CD4-positive, alpha-beta T cell (primary cell): ENCODE measurements at regions of chr1 and their contacts with region 1.

Region 1: DNA sequence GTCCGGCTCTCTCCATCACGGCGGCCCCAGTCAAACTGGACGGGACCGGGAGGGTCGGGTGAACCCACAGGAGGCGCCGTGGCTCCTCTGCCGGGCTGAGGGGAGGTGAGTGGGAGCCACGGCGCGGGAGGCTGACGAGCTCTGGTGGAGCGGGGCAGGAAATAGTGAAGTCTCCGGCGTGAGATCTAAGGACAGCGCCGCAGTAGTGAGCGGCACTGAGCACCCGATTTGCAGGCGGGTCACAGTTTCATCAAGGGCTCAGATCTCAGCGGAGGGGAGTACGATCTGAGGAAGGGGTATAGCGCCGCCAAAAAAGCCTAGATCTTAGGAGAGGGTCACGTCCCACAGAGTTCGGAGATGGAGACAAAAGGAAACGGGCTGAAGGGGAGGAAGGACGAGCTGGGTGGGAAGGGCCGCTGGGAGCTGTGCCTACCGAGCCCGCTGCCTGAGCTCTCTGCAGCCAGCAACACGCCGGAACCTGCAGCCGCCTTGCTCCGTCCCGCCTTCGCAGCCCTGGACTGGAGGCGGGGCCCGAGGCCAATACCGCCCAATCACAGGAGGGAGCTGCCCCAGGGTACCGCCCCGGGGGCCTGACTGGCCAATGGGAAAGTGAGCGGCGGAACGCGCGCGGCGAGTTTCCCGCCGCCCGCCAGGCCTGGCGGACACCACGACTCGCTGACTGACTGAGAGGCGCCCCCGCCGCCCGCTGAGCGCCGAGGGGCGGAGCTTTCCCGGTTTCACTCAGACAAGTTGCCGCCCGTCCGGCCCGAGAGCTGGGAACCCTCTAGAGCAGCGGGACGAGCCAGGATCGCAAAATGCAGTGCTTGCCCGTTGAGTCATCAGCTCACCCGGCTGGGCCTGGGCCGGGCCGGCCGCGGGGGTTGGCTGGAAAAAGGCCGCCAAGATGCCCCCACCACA is 1.9 kb downstream of the SFN start:
- DNase-seq: peak; percentile 85 to 97 (median 92)
- ATAC-seq: peak; percentile 94
- H3K4me3 ChIP-seq: peak overlapping the region; percentile 99
- H3K4me3 Mint-ChIP-seq: peak overlapping the region; percentile 94
- H3K27ac ChIP-seq: peak overlapping the region; percentile 71 to 76
- H3K27ac Mint-ChIP-seq: peak overlapping the region; percentile 66
- H3K4me1 ChIP-seq: peaks cover 43% of the 10 kb centered on the region
- H3K4me1 Mint-ChIP-seq: peaks cover 34% of the 10 kb centered on the region
- H3K27me3 ChIP-seq: no peaks in the 10 kb centered on the region
- H3K27me3 Mint-ChIP-seq: no peaks in the 10 kb centered on the region
- CTCF ChIP-seq: no peak

Region 2: GRCh38 chr1:26820784-26821269 is 44.0 kb before region 1 on chr1:
- CTCF ChIA-PET with region 1: interaction called, 6 read pairs
- POLR2A ChIA-PET with region 1: interaction called, 14 read pairs
- intact Hi-C with region 1: no loop called
- DNase-seq: peak in 6 of 14 experiments; percentile 27 to 80 (median 64)
- ATAC-seq: peak; percentile 96
- H3K4me3 ChIP-seq: peak overlapping the region; percentile 38
- H3K4me3 Mint-ChIP-seq: peak overlapping the region; percentile 83
- H3K27ac ChIP-seq: peak overlapping the region; percentile 8 to 55
- H3K27ac Mint-ChIP-seq: peak overlapping the region; percentile 83
- H3K4me1 ChIP-seq: peaks cover 33% of the 10 kb centered on the region
- H3K4me1 Mint-ChIP-seq: peaks cover 36% of the 10 kb centered on the region
- H3K27me3 ChIP-seq: no peaks in the 10 kb centered on the region
- H3K27me3 Mint-ChIP-seq: no peaks in the 10 kb centered on the region
- CTCF ChIP-seq: peak; percentile 60

Region 3: GRCh38 chr1:26833432-26834405 is 31.1 kb before region 1 on chr1:
- CTCF ChIA-PET with region 1: interaction called, 4 read pairs
- POLR2A ChIA-PET with region 1: interaction called, 29 read pairs
- intact Hi-C with region 1: loop called in 1 of 2 experiments (anchors 5 kb)
- DNase-seq: peak; percentile 76 to 99 (median 86)
- ATAC-seq: peak; percentile 94
- H3K4me3 ChIP-seq: peak overlapping the region; percentile 32
- H3K4me3 Mint-ChIP-seq: peak overlapping the region; percentile 86
- H3K27ac ChIP-seq: peak overlapping the region; percentile 96 to 97
- H3K27ac Mint-ChIP-seq: peak overlapping the region; percentile 100
- H3K4me1 ChIP-seq: peaks cover 75% of the 10 kb centered on the region
- H3K4me1 Mint-ChIP-seq: peaks cover 75% of the 10 kb centered on the region
- H3K27me3 ChIP-seq: no peaks in the 10 kb centered on the region
- H3K27me3 Mint-ChIP-seq: no peaks in the 10 kb centered on the region
- CTCF ChIP-seq: peak; percentile 33

Region 4: GRCh38 chr1:26889551-26890466 is 24.9 kb after region 1 on chr1 and contains the start of gene GPN2:
- CTCF ChIA-PET with region 1: interaction called, 3 read pairs
- POLR2A ChIA-PET with region 1: interaction called, 36 read pairs
- intact Hi-C with region 1: no loop called
- DNase-seq: peak; percentile 59 to 90 (median 70)
- ATAC-seq: peak; percentile 91
- H3K4me3 ChIP-seq: peak within 1 kb of the TSS; percentile 89
- H3K4me3 Mint-ChIP-seq: peak within 1 kb of the TSS; percentile 96
- H3K27ac ChIP-seq: peak within 1 kb of the TSS; percentile 87 to 89
- H3K27ac Mint-ChIP-seq: peak within 1 kb of the TSS; percentile 97
- H3K4me1 ChIP-seq: peaks cover 31% of the 10 kb centered on the region
- H3K4me1 Mint-ChIP-seq: peaks cover 39% of the 10 kb centered on the region
- H3K27me3 ChIP-seq: no peaks in the 10 kb centered on the region
- H3K27me3 Mint-ChIP-seq: no peaks in the 10 kb centered on the region
- CTCF ChIP-seq: no peak
- total RNA-seq, gene GPN2: 42.0 to 44.4 TPM

Region 5: GRCh38 chr1:26900001-26900814 is 35.3 kb after region 1 on chr1 and contains the start of gene GPATCH3:
- CTCF ChIA-PET with region 1: no interaction called
- POLR2A ChIA-PET with region 1: interaction called, 16 read pairs
- intact Hi-C with region 1: no loop called
- DNase-seq: peak; percentile 78 to 95 (median 86)
- ATAC-seq: peak; percentile 94
- H3K4me3 ChIP-seq: peak within 1 kb of the TSS; percentile 98
- H3K4me3 Mint-ChIP-seq: peak within 1 kb of the TSS; percentile 98
- H3K27ac ChIP-seq: peak within 1 kb of the TSS; percentile 82 to 94
- H3K27ac Mint-ChIP-seq: peak within 1 kb of the TSS; percentile 93
- H3K4me1 ChIP-seq: peaks cover 29% of the 10 kb centered on the region
- H3K4me1 Mint-ChIP-seq: peaks cover 31% of the 10 kb centered on the region
- H3K27me3 ChIP-seq: no peaks in the 10 kb centered on the region
- H3K27me3 Mint-ChIP-seq: no peaks in the 10 kb centered on the region
- CTCF ChIP-seq: no peak
- total RNA-seq, gene GPATCH3: 30.2 to 32.4 TPM

Region 6: DNA sequence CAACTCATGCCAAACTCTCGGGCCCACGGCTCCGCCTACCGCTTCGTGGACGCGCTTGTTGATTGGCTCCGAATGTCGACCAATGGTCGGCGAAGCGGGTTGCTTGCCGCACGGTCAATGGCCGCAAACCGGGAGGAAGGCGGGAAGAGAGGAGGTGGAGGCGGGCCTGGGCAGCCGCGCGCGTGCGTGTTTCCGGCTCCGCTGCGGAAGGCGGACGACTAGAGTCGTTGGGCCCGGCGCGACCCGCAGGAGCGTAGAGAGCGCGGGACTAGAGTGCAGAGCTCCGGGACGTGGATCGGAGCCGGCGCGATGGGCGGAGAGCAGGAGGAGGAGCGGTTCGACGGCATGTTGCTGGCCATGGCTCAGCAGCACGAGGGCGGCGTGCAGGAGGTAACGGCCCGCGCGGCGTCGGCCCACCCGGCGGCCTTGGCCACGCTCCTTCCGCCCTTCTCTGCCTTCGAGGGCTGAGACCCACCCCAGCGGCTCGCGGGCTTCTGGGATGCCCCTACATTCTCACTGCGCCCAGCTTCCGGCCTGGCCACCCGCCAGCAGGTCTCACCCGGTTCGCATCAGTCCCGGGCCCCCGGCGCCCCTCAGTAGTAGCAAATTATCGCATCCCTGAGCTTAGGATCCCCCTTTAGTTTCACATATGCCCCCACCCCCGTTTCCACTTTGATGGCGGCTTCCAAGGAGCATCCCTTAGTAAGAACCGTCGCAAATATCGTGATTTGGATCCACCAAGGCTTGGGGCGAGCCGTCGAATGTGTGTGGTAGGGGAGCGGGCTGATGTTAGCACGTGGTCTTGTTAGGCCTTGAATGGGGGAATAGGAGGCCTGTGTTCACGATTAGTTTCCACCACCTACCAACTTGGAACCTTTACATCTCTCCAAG is 56.9 kb after region 1 on chr1 and contains the start of gene NUDC:
- CTCF ChIA-PET with region 1: interaction called, 3 read pairs
- POLR2A ChIA-PET with region 1: no interaction called
- intact Hi-C with region 1: loop called in 1 of 2 experiments (anchors 2 kb)
- DNase-seq: peak; percentile 91 to 98 (median 93)
- ATAC-seq: peak; percentile 94
- H3K4me3 ChIP-seq: peak within 1 kb of the TSS; percentile 74
- H3K4me3 Mint-ChIP-seq: peak within 1 kb of the TSS; percentile 91
- H3K27ac ChIP-seq: peak within 1 kb of the TSS; percentile 83 to 85
- H3K27ac Mint-ChIP-seq: peak within 1 kb of the TSS; percentile 90
- H3K4me1 ChIP-seq: peaks cover 28% of the 10 kb centered on the region
- H3K4me1 Mint-ChIP-seq: peaks cover 37% of the 10 kb centered on the region
- H3K27me3 ChIP-seq: no peaks in the 10 kb centered on the region
- H3K27me3 Mint-ChIP-seq: no peaks in the 10 kb centered on the region
- CTCF ChIP-seq: no peak
- total RNA-seq, gene NUDC: 43.0 to 44.6 TPM

Region 7: GRCh38 chr1:27166929-27167328 is 302.1 kb after region 1 on chr1:
- CTCF ChIA-PET with region 1: no interaction called
- POLR2A ChIA-PET with region 1: no interaction called
- intact Hi-C with region 1: no loop called
- DNase-seq: no peak
- ATAC-seq: no peak
- H3K4me3 ChIP-seq: no peak overlapping the region
- H3K4me3 Mint-ChIP-seq: no peak overlapping the region
- H3K27ac ChIP-seq: no peak overlapping the region
- H3K27ac Mint-ChIP-seq: no peak overlapping the region
- H3K4me1 ChIP-seq: peaks cover 4% of the 10 kb centered on the region
- H3K4me1 Mint-ChIP-seq: peaks cover 4% of the 10 kb centered on the region
- H3K27me3 ChIP-seq: no peaks in the 10 kb centered on the region
- H3K27me3 Mint-ChIP-seq: no peaks in the 10 kb centered on the region
- CTCF ChIP-seq: no peak